ENCODE measurements at regions of chr6 and their contacts with region 1.

Region 1: GRCh38 chr6:43286980-43287716 is 10.9 kb upstream of the SLC22A7 start:
- DNase-seq: no peak
- ATAC-seq: peak; percentile 59
- H3K4me3 Mint-ChIP-seq: 0 out of 2 replicates have a peak overlapping the region, but pooled peaks have one; percentile 40
- H3K27ac Mint-ChIP-seq: no peak overlapping the region
- H3K4me1 Mint-ChIP-seq: peaks cover 7% of the 10 kb centered on the region
- H3K27me3 Mint-ChIP-seq: peaks cover 21% of the 10 kb centered on the region
- CTCF ChIP-seq: no peak

Region 2: GRCh38 chr6:43193939-43194338 is 93.2 kb before region 1 on chr6:
- CTCF ChIA-PET with region 1: no interaction called
- POLR2A ChIA-PET with region 1: no interaction called
- DNase-seq: no peak
- ATAC-seq: no peak
- H3K4me3 Mint-ChIP-seq: no peak overlapping the region
- H3K27ac Mint-ChIP-seq: no peak overlapping the region
- H3K4me1 Mint-ChIP-seq: no peaks in the 10 kb centered on the region
- H3K27me3 Mint-ChIP-seq: no peaks in the 10 kb centered on the region
- CTCF ChIP-seq: no peak

Region 3: DNA sequence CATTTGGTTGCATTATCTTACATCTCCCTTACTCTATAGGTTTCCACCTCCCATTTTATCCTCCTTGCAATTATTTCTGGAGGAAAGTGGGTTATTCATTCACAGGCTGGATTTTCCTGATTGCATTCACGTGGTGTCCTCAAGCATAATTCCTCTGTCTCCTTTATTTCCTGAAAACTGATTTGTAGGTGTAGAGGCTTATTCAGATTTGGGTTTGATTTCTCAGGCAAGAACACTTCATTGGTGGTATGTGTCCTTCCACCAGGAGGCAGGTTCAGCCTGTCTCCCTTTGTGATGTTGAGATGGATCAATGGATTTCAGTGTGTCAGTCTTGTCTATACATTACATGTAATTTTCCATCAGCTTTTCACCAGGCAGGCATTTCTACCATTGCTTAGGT is 75.2 kb before region 1 on chr6:
- CTCF ChIA-PET with region 1: no interaction called
- POLR2A ChIA-PET with region 1: no interaction called
- DNase-seq: no peak
- ATAC-seq: peak; percentile 57
- H3K4me3 Mint-ChIP-seq: no peak overlapping the region
- H3K27ac Mint-ChIP-seq: no peak overlapping the region
- H3K4me1 Mint-ChIP-seq: 0 out of 2 replicates have a peak, but pooled peaks cover 2% of the 10 kb centered on the region
- H3K27me3 Mint-ChIP-seq: no peaks in the 10 kb centered on the region
- CTCF ChIP-seq: no peak

Region 4: GRCh38 chr6:43263314-43264178 is 23.6 kb before region 1 on chr6:
- CTCF ChIA-PET with region 1: interaction called, 27 read pairs
- POLR2A ChIA-PET with region 1: no interaction called
- DNase-seq: peak; percentile 90
- ATAC-seq: peak; percentile 87
- H3K4me3 Mint-ChIP-seq: no peak overlapping the region
- H3K27ac Mint-ChIP-seq: peak overlapping the region; percentile 28; the same call in 1 of the 2 replicates
- H3K4me1 Mint-ChIP-seq: peaks cover 24% of the 10 kb centered on the region
- H3K27me3 Mint-ChIP-seq: peaks cover 14% of the 10 kb centered on the region
- CTCF ChIP-seq: peak; percentile 60; the same call in 1 of the 2 replicates

Region 5: DNA sequence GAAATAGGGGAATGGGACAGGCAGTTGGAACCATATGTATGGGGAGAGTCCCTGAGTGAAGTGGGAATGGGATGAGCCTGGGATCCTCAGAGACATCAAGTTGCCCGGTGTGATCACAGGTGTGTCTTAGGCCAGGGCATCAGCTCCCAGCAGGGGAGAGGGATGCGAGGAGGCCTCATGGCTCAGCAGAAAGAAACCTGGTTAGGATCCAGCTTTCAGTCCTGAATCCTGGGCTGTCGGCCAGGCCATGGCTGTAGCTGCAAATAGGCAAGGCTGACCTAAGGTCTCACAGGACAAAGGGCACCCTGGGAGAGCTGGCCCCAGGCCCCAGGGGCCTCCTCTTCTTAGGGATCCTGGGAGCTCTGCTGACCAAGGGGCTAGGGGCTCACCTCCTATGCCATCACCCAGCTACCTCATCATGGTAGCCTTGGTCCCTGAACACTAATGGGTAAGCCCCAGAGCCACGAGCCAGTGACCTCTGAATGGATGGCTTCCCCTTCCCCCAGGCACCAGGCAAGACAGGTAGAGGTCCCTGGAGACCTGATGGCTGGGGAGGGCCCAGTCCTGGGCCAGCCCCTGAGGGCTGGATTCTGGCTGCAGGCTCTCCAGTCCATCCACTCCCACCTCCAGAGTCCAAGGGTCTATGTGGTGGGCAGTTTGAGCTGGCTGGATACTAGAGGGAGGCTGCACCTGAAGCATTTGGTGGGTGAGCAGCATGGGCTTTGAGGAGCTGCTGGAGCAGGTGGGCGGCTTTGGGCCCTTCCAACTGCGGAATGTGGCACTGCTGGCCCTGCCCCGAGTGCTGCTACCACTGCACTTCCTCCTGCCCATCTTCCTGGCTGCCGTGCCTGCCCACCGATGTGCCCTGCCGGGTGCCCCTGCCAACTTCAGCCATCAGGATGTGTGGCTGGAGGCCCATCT is 10.8 kb after region 1 on chr6 and contains the start of gene SLC22A7:
- CTCF ChIA-PET with region 1: interaction called, 49 read pairs
- POLR2A ChIA-PET with region 1: interaction called, 8 read pairs
- DNase-seq: no peak
- ATAC-seq: no peak
- H3K4me3 Mint-ChIP-seq: no peak within 1 kb of the TSS
- H3K27ac Mint-ChIP-seq: no peak within 1 kb of the TSS
- H3K4me1 Mint-ChIP-seq: peaks cover 11% of the 10 kb centered on the region
- H3K27me3 Mint-ChIP-seq: peaks cover 5% of the 10 kb centered on the region
- CTCF ChIP-seq: no peak
- total RNA-seq, gene SLC22A7: not detected in 3 replicates

Region 6: GRCh38 chr6:43318011-43318410 is 30.9 kb after region 1 on chr6:
- CTCF ChIA-PET with region 1: interaction called, 10 read pairs
- POLR2A ChIA-PET with region 1: no interaction called
- DNase-seq: no peak
- ATAC-seq: no peak
- H3K4me3 Mint-ChIP-seq: no peak overlapping the region
- H3K27ac Mint-ChIP-seq: no peak overlapping the region
- H3K4me1 Mint-ChIP-seq: peaks cover 22% of the 10 kb centered on the region
- H3K27me3 Mint-ChIP-seq: no peaks in the 10 kb centered on the region; the same call in 1 of the 2 replicates
- CTCF ChIP-seq: no peak

Region 7: DNA sequence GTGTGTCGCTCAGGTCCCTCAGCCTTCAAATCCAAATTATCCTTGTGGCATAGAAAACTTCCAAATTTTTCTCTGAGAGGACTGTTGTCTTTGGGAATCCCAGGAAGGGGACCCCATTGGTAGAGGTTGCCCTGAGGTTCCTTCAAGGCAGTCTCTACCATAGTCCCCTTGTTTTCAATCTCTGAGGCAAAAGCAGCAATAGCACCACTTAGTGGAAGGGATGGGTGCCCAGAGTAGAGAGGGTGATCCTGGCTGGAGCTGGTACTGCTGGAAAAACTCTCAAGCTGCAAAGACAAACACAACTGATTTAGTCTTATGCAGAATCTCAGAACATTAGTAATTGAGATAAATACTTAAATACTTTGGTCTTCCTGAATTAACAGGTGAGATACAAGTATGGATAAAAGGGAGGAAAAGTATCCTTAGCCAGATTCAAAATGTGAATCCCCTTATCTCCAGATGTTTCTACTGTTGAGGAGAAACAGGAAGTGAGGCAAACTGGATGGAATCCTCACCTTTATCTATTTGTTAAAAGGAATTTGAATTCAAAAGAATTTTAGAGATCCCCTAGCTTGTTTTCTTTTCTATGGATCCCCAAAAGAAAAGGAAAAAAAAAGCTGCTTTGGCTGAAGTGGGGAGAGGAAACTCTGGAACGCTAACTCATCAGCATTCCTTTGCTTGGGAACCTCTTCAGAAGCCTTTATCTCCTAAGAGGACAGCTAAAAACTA is 68.9 kb after region 1 on chr6:
- CTCF ChIA-PET with region 1: interaction called, 10 read pairs
- POLR2A ChIA-PET with region 1: interaction called, 3 read pairs
- DNase-seq: peak; percentile 22
- ATAC-seq: peak; percentile 99
- H3K4me3 Mint-ChIP-seq: no peak overlapping the region
- H3K27ac Mint-ChIP-seq: peak overlapping the region; percentile 24
- H3K4me1 Mint-ChIP-seq: peaks cover 23% of the 10 kb centered on the region
- H3K27me3 Mint-ChIP-seq: no peaks in the 10 kb centered on the region
- CTCF ChIP-seq: no peak

Measured in WTC11 (cell line).